Dorsolateral prefrontal cortex (tissue), 120 donors: ENCODE measurements at regions of chr10 and their contacts with region 1.

Region 1: DNA sequence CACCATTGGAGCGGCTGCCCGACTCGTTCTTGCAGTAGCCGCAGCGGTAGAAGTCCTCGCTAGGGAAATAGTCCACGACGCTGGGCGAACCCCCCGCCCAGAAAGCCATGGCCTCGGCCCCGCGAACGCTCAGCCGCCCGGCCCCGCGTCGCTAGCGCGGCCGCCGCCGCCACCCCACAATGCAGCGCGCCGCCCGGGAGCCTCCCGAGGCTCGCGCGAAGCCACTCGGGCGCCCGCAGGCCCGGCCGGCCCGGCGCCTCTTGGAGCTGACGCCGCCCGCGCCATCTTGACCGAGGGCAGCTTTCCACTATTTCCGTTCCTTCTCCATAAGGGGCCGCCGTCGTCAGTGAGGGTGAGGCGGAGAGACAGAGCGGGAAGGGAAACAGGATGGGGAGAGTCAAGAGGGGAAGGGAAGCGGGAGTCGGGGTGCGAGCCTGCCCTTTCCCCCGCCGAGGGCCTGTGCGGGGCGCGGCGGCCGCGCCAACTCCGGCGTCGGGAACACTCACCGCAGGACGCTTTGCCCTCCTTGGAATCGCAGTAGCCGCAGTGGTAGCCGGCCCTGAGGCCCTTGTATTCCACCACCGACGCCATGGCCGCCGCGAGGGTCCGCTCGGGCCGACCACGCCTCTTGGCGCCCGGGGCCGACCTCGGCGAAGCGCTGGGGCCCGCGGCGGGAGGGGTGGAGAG is at the start of gene ATE1:
- DNase-seq: peak; percentile 77 to 92 (median 90)
- H3K4me3 ChIP-seq: peak within 1 kb of the TSS; percentile 62 to 99 (median 97)
- H3K27ac ChIP-seq: peak within 1 kb of the TSS; percentile 78 to 100 (median 99)
- H3K27me3 ChIP-seq: no peaks in the 10 kb centered on the region
- CTCF ChIP-seq: peak in 33 of 56 donors; percentile 3 to 48 (median 22)
- total RNA-seq, gene ATE1: 50.0 to 91.0 (median 68.8) TPM

Region 2: DNA sequence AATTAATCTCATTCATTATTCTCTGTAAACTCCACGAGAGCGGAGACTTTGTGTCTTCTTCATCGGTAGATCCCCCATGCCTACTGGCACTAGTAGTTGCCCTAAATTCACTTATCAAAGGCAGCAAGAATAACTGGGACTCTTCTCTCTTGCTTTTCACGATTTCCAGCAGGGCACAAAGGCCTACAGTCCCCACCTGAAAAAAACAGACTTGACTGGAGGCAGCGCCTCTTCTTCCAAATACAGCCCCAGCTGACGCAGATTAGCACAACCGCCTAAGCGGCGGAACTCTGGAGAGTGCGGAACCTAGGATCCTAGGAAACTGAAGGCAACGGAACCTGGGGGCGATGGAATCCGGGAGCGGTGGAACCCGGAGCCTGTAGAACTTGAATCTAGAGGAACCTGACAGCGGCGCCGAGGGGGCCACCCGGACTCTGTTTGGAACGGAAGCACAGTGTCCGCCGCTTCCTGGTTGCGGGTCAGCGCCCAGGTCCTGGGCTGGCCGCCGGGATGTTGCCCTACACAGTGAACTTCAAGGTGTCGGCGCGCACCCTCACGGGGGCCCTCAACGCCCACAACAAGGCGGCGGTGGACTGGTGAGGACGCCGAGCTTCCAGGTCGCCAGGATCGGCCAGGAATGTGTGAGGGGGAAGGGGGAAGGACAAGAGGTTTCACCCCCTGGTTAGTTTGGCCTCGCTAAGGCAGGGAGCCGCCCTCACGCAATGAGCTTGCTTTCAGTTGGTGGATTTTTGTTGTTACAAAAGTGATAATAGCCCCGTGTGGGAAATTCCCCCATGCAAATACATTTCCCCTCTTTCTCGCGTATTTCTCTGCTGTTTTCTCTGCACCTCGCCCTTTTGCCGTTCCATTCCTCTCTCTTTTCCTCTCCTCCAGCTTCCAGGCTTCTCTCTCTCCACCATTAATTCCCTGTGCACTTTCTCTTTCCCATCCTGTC is 1076.8 kb before region 1 on chr10 and contains the start of gene WDR11:
- intact Hi-C with region 1: loop called in 1 of 2 experiments (anchors 5 kb)
- DNase-seq: peak; percentile 86 to 95 (median 92)
- H3K4me3 ChIP-seq: peak within 1 kb of the TSS; percentile 60 to 99 (median 87)
- H3K27ac ChIP-seq: peak within 1 kb of the TSS in 57 of 59 donors; percentile 13 to 90 (median 74)
- H3K27me3 ChIP-seq: no peaks in the 10 kb centered on the region
- CTCF ChIP-seq: peak in 40 of 56 donors; percentile 8 to 60 (median 35)
- total RNA-seq, gene WDR11: 38.1 to 89.1 (median 58.8) TPM

Region 3: DNA sequence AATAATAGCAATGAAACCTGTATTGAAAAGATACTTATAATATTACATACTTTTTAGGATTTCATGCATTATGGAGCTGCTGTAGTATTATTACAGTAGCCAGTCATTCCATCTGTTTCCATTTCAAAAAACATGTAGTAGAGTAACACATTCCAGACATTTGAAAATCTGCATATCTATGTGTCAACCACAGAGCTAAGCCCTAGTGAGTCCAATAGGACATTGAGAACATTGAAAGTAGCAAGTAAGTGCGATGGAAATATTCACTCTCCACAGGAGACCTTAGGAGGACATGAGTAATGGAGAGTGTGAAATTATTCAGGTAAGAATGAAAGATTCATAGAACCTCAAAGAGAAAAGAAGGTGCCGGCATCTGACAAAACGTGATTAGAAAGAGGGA is 31.7 kb after region 1 on chr10:
- intact Hi-C with region 1: no loop called
- DNase-seq: no peak
- H3K4me3 ChIP-seq: no peak overlapping the region
- H3K27ac ChIP-seq: no peak overlapping the region
- H3K27me3 ChIP-seq: no peaks in the 10 kb centered on the region
- CTCF ChIP-seq: no peak

Region 4: GRCh38 chr10:121974535-121975294 is 46.7 kb after region 1 on chr10 and contains the start of gene NSMCE4A:
- intact Hi-C with region 1: loop called (anchors 1 to 2 kb)
- DNase-seq: peak; percentile 49 to 85 (median 64)
- H3K4me3 ChIP-seq: peak within 1 kb of the TSS; percentile 68 to 95 (median 86)
- H3K27ac ChIP-seq: peak within 1 kb of the TSS; percentile 44 to 98 (median 94)
- H3K27me3 ChIP-seq: no peaks in the 10 kb centered on the region
- CTCF ChIP-seq: peak in 34 of 56 donors; percentile 20 to 89 (median 66)
- total RNA-seq, gene NSMCE4A: 16.5 to 50.0 (median 28.4) TPM

Region 5: DNA sequence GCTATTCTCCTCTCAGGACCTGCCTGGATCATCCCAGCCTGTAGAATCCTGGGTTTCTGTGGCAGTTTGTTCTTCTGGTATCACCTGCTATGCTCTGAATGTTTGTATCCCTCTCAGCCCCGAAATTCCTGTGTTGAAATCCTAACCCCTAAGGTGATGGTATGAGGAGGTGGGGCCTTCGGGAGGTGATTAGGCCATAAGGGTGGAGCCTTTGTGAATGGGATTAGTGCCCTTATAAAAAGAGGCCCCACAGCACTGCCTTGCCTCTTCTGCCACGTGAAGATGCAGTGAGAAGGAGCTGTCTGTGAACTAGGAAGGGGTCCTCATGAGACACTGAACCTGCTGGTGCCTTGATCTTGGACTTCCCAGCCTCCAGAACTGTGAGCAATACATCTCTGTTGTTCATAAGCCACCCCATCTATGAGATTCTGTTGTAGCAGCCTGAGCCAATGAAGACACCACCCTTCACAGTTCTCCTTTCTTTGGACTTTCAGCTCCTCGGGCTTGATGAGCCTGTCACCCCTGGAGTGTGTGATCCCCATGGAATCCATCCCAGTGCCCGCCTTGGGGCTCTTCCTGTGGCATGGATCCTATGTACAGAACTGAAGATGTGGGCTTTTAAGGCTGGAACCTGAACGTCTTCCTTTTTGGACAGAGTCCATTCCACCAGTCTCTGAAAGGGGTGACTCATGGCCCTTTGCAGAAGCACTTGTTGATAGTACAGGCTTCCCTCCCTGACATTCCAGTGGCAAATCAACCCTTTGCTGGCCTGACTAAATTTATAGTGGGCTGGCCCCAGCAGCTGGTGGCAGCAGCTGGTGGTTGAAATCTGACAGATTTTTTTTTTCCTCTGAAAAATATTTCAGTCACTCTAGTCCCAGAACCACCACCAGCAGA is 199.0 kb after region 1 on chr10:
- intact Hi-C with region 1: no loop called
- DNase-seq: no peak
- H3K4me3 ChIP-seq: no peak overlapping the region
- H3K27ac ChIP-seq: peak overlapping the region in 2 of 59 donors; percentile 13 to 31
- H3K27me3 ChIP-seq: peaks cover 0 to 6% (median 0%) of the 10 kb centered on the region in 45 donors
- CTCF ChIP-seq: no peak